ENCODE measurements at regions of chr7 and their contacts with region 1.

Region 1: GRCh38 chr7:142379201-142379885 is 121.5 kb upstream of the PRSS58 start:
- DNase-seq: no peak
- ATAC-seq: no peak
- H3K4me3 Mint-ChIP-seq: no peak overlapping the region
- H3K27ac Mint-ChIP-seq: no peak overlapping the region
- H3K4me1 Mint-ChIP-seq: peaks cover 9% of the 10 kb centered on the region
- H3K27me3 Mint-ChIP-seq: peaks cover 1% of the 10 kb centered on the region
- CTCF ChIP-seq: no peak

Region 2: DNA sequence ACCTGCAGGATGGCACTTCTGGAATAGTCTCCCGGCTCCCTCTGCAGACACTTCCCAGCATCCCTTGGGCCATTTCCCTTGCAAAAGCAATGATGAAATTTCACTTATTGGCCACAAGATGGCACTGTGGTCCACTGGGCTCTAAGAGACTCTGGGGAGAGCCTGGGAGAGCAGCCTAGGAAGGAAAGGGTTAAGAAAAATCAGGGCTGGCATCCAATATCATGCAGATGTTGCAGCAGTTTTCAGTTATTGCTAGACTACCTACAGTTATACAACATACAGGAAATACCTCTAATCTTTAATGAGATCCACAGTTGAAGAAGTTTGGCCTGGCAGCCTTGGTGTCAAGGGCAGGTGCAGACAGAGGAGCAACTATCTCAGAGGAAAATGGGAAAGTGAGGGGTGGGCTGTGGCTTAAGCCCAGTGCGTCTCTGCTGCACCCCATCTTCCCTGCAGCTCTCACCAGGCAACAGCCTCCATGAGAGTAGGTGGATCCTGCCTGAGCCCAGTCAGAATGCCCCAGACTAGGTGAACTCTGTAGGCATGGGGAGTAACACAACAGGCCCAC is 21.3 kb before region 1 on chr7:
- CTCF ChIA-PET with region 1: interaction called, 101 read pairs
- POLR2A ChIA-PET with region 1: interaction called, 3 read pairs
- intact Hi-C with region 1: no loop called
- DNase-seq: peak; percentile 51
- ATAC-seq: peak; percentile 81
- H3K4me3 Mint-ChIP-seq: no peak overlapping the region
- H3K27ac Mint-ChIP-seq: no peak overlapping the region
- H3K4me1 Mint-ChIP-seq: peaks cover 24% of the 10 kb centered on the region
- H3K27me3 Mint-ChIP-seq: peaks cover 4% of the 10 kb centered on the region
- CTCF ChIP-seq: peak; percentile 78